Right cardiac atrium (tissue), 5 donors: ENCODE measurements at regions of chr20 and their contacts with region 1.

Region 1: DNA sequence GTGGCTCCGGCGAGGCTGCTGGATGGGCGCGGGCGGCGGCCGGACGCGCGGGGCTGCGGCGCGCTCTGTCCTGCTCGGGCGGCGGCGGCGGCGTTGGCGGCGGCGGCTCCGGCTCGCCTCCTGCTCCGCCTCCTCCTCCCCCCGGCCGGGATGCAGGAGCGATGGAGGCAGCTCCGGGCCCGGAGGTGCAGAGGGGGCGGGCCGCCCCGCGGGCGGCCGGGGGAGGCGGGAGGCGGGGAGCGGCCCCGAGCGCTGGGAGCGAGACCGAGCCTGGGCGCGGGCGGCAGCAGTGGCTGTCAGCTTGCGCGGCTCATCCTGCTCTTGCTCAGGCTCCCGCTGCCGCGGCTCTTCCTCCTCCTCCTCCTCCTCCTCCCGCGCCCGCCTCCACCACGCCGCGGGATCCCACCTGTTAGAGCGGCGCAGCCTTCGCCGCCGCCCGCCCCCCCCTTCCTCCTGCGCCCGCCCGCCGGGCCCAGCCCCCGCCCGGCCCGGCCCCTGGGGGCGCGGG is at the start of gene NOL4L:
- DNase-seq: peak; percentile 38 to 74 (median 74)
- ATAC-seq: peak in 1 of 2 donors; percentile 9
- H3K4me3 ChIP-seq: peak within 1 kb of the TSS; percentile 88
- H3K27ac ChIP-seq: no peak within 1 kb of the TSS
- H3K4me1 ChIP-seq: no peaks in the 10 kb centered on the region
- H3K27me3 ChIP-seq: no peaks in the 10 kb centered on the region
- total RNA-seq, gene NOL4L: 6.5 to 10.9 (median 8.0) TPM

Region 2: DNA sequence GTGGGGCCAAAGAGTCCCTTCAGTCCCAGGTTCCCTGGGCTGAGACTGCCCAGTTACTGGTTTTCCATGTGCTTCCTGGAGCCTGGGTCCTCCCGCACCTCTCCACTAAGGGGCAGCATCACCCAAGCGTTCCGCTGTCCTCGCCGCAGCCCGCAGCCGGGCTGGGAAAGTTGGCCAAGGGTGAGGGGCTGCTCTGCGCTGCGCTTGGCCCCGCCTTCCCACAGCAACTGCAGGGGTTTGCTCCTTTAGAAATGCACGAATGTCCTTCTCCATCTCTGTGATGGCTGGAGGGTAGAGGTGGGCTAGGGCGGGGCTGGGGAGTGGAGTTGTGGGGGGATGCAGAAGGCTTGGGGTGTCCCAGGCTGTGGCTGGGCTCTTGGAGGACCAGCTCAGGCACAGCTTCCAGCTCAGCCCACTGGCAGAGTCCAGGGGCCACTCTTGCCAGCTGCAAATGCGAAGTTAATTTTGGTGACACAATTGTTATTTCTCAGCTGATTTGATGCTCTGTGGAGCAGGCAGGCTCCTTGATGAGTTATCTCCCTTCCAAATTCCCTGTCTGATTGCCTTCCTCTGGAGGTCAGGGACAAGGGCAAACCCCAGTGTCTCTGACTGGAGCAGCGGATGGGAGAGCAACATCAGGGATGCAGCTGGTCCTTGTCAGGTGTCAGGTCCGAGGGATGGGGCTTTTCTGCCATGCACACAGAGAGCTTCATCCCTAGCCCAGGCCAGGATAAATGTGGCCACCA is 63.1 kb before region 1 on chr20:
- intact Hi-C with region 1: loop called in 2 of 4 experiments (anchors 5 to 10 kb)
- DNase-seq: peak; percentile 67 to 85 (median 84)
- ATAC-seq: peak; percentile 72
- H3K4me3 ChIP-seq: no peak overlapping the region
- H3K27ac ChIP-seq: no peak overlapping the region
- H3K4me1 ChIP-seq: peaks cover 2% of the 10 kb centered on the region
- H3K27me3 ChIP-seq: no peaks in the 10 kb centered on the region